Naive thymus-derived CD4-positive, alpha-beta T cell (primary cell): ENCODE measurements at regions of chr2 and their contacts with region 1.

Region 1: DNA sequence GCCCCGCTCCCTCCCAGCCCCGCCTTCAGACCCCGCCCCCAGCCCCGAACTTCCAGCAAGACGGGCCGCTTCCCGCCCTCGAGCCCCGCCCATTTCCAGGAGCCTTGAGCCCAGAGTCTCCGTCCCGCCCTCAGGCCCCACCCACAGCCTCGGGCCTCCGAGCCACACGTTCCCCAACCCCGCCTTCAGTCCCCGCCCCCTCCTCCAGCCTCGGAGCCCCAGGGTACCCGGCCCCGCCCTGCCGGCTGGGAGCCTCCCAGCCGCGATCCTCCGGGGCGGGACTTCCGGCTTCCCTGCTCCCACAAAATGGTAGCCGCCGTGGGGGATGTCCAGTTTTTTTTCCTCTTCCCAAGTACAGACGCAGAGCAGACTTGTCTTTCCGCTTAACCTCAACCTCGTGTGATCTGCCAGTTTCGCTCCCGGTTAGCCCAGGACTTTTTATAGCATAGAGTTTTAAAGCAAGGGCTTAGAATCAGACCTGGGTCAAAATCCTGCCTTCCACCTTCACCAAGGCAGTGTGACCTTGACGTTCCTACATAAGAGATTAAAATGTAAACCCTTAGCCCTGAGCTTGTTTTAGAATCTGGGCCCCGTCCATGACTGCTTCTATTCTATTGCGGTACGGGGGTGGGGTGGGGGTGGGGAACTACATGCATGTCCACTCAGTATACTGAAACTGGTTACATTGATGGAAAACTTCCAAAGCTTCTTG is 435 bp upstream of the GPR155 start:
- DNase-seq: peak; percentile 66 to 93 (median 78)
- ATAC-seq: peak; percentile 89
- H3K4me3 ChIP-seq: peak overlapping the region; percentile 90
- H3K4me3 Mint-ChIP-seq: peak overlapping the region; percentile 92 to 100 (median 98)
- H3K27ac ChIP-seq: peak overlapping the region; percentile 87
- H3K27ac Mint-ChIP-seq: peak overlapping the region; percentile 88 to 100 (median 96)
- H3K4me1 ChIP-seq: peaks cover 31 to 38% of the 10 kb centered on the region in 2 donors
- H3K4me1 Mint-ChIP-seq: peaks cover 37 to 83% (median 77%) of the 10 kb centered on the region in 7 donors
- H3K27me3 ChIP-seq: no peaks in the 10 kb centered on the region
- H3K27me3 Mint-ChIP-seq: no peaks in the 10 kb centered on the region

Region 2: DNA sequence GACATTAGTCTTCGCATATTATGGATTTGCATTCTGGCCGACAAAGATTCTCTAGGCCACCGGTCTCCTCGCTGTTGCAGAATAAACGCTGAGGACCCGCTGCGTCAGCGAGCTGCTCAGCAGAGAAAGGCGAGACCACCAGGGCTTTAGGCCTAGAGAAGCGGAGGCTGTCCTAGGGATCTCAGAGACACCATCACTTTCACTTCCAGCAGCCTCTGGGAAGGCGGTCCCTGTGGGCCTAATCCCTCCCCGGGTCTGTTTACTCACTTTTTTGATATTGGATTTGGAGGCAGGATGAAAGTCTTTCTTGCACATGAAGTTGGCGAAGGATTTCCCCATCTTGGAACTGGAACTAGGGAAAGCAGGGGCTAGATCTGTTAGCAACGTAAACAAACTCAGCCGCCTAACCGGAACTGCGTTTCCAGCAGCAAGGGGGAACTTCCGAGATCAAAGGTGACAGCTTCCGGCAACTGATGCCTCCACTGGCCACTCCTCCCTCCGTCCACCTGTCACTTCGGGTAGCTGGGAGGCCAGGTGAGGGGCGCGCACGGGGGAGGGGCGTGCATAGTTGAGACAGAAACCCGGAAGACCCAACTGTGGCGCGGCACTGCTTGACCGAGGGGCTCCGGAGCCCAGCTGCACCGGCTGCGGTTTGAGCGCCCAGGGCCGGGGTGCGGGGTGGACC is 91.8 kb before region 1 on chr2 and contains the start of gene SCRN3:
- CTCF ChIA-PET with region 1: no interaction called
- POLR2A ChIA-PET with region 1: no interaction called
- intact Hi-C with region 1: loop called (anchors 1 to 5 kb)
- DNase-seq: peak; percentile 49 to 89 (median 80)
- ATAC-seq: peak; percentile 93
- H3K4me3 ChIP-seq: peak within 1 kb of the TSS; percentile 85
- H3K4me3 Mint-ChIP-seq: peak within 1 kb of the TSS; percentile 86 to 100 (median 98)
- H3K27ac ChIP-seq: peak within 1 kb of the TSS; percentile 93
- H3K27ac Mint-ChIP-seq: peak within 1 kb of the TSS; percentile 97 to 100 (median 99)
- H3K4me1 ChIP-seq: peaks cover 18 to 23% of the 10 kb centered on the region in 2 donors
- H3K4me1 Mint-ChIP-seq: peaks cover 27 to 80% (median 65%) of the 10 kb centered on the region in 7 donors
- H3K27me3 ChIP-seq: no peaks in the 10 kb centered on the region
- H3K27me3 Mint-ChIP-seq: no peaks in the 10 kb centered on the region
- total RNA-seq, gene SCRN3: 12.3 to 22.1 (median 16.4) TPM

Region 3: GRCh38 chr2:174553811-174554493 is 66.7 kb after region 1 on chr2:
- CTCF ChIA-PET with region 1: no interaction called
- POLR2A ChIA-PET with region 1: interaction called, 8 read pairs
- intact Hi-C with region 1: loop called in 1 of 2 experiments (anchors 2 kb)
- DNase-seq: peak in 2 of 9 donors; percentile 11
- ATAC-seq: peak; percentile 66
- H3K4me3 ChIP-seq: peak overlapping the region; percentile 20
- H3K4me3 Mint-ChIP-seq: peak overlapping the region in 8 of 10 donors; percentile 2 to 58 (median 41)
- H3K27ac ChIP-seq: peak overlapping the region; percentile 58
- H3K27ac Mint-ChIP-seq: peak overlapping the region; percentile 51 to 91 (median 85)
- H3K4me1 ChIP-seq: peaks cover 22 to 27% of the 10 kb centered on the region in 2 donors
- H3K4me1 Mint-ChIP-seq: peaks cover 15 to 54% (median 47%) of the 10 kb centered on the region in 7 donors
- H3K27me3 ChIP-seq: no peaks in the 10 kb centered on the region
- H3K27me3 Mint-ChIP-seq: no peaks in the 10 kb centered on the region

Region 4: DNA sequence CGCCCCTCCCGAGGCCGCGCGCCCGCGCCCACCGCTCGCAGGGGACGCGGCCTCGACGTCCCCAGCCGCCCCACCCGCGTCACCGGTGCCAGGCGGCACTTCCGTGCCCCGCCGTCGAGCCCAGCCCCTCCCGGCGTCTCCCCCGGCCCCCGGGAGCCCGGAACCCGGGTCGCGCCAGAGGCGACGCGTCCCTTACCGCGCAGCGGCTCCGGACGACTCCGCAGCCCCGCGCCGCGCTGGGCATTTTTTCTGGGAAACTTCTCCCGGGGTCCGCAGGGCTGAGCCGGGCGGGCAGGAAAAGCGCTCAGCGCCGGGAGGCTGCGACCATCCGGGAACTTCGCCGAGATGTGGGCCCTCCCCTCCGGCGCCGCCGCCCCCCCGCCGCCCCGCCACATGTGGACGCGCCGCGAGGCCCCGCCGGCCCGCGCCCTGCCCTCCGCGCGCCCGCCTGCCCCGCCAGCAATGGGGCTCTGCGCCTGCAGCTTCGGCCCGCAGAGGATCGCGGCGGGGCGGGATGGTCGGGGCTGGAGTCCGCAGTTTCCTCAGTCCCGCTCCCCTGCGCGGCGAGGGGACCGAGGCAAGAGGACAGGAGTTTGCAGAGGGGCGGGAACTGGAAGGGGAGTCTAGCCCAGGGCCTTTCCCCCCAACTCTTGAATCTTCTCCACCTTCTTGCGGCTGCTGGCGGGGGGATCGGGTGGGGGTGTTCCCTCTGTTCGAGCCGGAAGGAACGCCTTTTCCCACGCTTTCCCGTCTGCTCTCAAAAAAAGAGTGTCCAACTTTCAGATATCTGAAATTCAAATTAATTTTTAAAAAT is 195.5 kb after region 1 on chr2:
- CTCF ChIA-PET with region 1: interaction called, 3 read pairs
- POLR2A ChIA-PET with region 1: interaction called, 3 read pairs
- intact Hi-C with region 1: loop called (anchors 2 kb)
- DNase-seq: peak; percentile 56 to 73 (median 71)
- ATAC-seq: peak; percentile 78
- H3K4me3 ChIP-seq: peak overlapping the region; percentile 72
- H3K4me3 Mint-ChIP-seq: peak overlapping the region; percentile 92 to 99 (median 96)
- H3K27ac ChIP-seq: peak overlapping the region; percentile 88
- H3K27ac Mint-ChIP-seq: peak overlapping the region; percentile 91 to 98 (median 96)
- H3K4me1 ChIP-seq: peaks cover 11% of the 10 kb centered on the region in 2 donors
- H3K4me1 Mint-ChIP-seq: peaks cover 34 to 69% (median 61%) of the 10 kb centered on the region in 7 donors
- H3K27me3 ChIP-seq: no peaks in the 10 kb centered on the region
- H3K27me3 Mint-ChIP-seq: no peaks in the 10 kb centered on the region

Region 5: DNA sequence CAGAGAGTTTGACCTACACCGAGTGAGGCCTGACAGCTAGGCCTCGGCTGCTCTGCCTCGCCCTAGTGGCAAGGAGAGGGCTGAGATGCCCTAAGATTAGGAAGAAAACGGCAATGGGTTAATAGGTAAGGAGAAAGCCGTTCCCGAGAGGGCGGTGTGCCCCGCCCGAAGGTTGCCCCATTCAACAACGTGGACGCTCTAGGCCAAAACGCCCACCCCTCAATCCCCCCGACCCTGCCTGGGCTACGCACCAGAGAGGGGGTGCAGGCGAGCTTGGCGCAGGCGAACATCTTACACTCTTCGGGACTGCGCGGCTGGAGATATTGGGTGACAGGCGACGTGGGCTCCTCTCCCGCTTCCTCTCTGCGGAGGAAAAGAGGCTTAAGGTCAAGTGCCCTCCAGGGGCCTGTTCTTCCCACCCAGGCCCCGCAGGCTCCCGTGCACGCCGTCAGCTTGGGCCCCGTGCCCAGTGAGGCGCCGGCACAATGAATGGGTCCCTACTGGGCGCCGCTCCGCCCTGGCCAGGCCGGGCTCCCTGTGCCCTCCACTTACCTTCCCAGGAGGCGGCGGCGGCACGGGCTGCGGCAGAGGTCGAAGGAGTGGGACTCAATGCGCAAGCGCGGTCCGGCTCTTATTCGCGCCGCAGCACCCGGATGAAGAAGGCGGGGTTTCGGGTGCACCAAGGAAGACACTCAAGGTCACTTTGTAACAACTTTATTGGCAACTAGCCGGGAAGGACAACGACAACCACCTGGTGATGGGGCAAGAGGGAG is 694.0 kb after region 1 on chr2 and contains the start of gene ATP5MC3:
- CTCF ChIA-PET with region 1: no interaction called
- POLR2A ChIA-PET with region 1: no interaction called
- intact Hi-C with region 1: loop called (anchors 5 kb)
- DNase-seq: peak; percentile 83 to 92 (median 89)
- ATAC-seq: peak; percentile 93
- H3K4me3 ChIP-seq: peak within 1 kb of the TSS; percentile 84
- H3K4me3 Mint-ChIP-seq: peak within 1 kb of the TSS; percentile 77 to 96 (median 88)
- H3K27ac ChIP-seq: peak within 1 kb of the TSS; percentile 89
- H3K27ac Mint-ChIP-seq: peak within 1 kb of the TSS; percentile 86 to 99 (median 93)
- H3K4me1 ChIP-seq: peaks cover 6 to 13% of the 10 kb centered on the region in 2 donors
- H3K4me1 Mint-ChIP-seq: peaks cover 14 to 39% (median 32%) of the 10 kb centered on the region in 7 donors
- H3K27me3 ChIP-seq: no peaks in the 10 kb centered on the region
- H3K27me3 Mint-ChIP-seq: no peaks in the 10 kb centered on the region
- total RNA-seq, gene ATP5MC3: 70.3 to 220 (median 77.6) TPM